Activated naive CD4-positive, alpha-beta T cell treated with anti-CD3 and anti-CD28 coated beads for 36 hours (primary cell): ENCODE measurements at regions of chr5 and their contacts with region 1.

Region 1: GRCh38 chr5:158819840-158820620 is 279.7 kb downstream of the EBF1 start:
- DNase-seq: peak; percentile 42
- H3K4me3 Mint-ChIP-seq: no peak overlapping the region
- H3K27ac Mint-ChIP-seq: no peak overlapping the region
- H3K4me1 Mint-ChIP-seq: peaks cover 28% of the 10 kb centered on the region
- H3K27me3 Mint-ChIP-seq: peaks cover 2% of the 10 kb centered on the region

Region 2: DNA sequence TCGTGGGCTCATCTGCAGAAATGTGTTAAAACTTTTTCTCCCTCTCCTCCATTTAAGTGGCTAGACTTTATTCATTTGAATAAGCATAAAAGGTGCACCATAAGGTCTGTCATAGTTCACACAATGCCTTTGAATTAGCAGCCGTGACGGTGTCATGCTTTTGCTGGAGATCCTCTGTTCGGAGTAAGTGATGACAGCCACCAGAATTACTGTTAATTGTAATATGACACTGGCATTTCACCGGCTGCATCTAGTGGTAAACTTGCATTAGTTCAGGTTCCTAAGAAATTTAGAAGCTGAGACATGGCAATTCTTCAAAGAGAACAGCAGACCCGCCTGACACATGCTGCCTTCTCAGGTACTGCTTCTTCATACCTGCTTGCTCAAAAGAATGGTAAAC is 37.9 kb after region 1 on chr5:
- CTCF ChIA-PET with region 1: no interaction called
- intact Hi-C with region 1: loop called (anchors 2 kb)
- DNase-seq: no peak
- H3K4me3 Mint-ChIP-seq: no peak overlapping the region
- H3K27ac Mint-ChIP-seq: no peak overlapping the region
- H3K4me1 Mint-ChIP-seq: peaks cover 42% of the 10 kb centered on the region
- H3K27me3 Mint-ChIP-seq: no peaks in the 10 kb centered on the region

Region 3: GRCh38 chr5:159515909-159516415 is 695.9 kb after region 1 on chr5:
- CTCF ChIA-PET with region 1: no interaction called
- intact Hi-C with region 1: no loop called
- DNase-seq: peak; percentile 87
- H3K4me3 Mint-ChIP-seq: no peak overlapping the region
- H3K27ac Mint-ChIP-seq: no peak overlapping the region
- H3K4me1 Mint-ChIP-seq: peaks cover 9% of the 10 kb centered on the region
- H3K27me3 Mint-ChIP-seq: peaks cover 4% of the 10 kb centered on the region